SK-N-SH (cell line): ENCODE measurements at regions of chr5 and their contacts with region 1.

Region 1: GRCh38 chr5:149035372-149035790 is 27.5 kb downstream of the SH3TC2 start:
- DNase-seq: peak; percentile 67
- H3K4me3 ChIP-seq: no peak overlapping the region; a peak in 1 of 4 replicates
- H3K27ac ChIP-seq: no peak overlapping the region
- H3K4me1 ChIP-seq: peaks cover 0 to 6% of the 10 kb centered on the region in 2 experiments; a peak in 2 of 4 replicates
- H3K27me3 ChIP-seq: no peaks in the 10 kb centered on the region
- CTCF ChIP-seq: peak; percentile 95
- EP300 ChIP-seq: no peak
- RAD21 ChIP-seq: peak; percentile 97

Region 2: GRCh38 chr5:148443998-148444397 is 591.4 kb before region 1 on chr5:
- CTCF ChIA-PET with region 1: interaction called, 38 read pairs
- POLR2A ChIA-PET with region 1: no interaction called
- DNase-seq: peak; percentile 52
- H3K4me3 ChIP-seq: no peak overlapping the region
- H3K27ac ChIP-seq: no peak overlapping the region
- H3K4me1 ChIP-seq: no peaks in the 10 kb centered on the region
- H3K27me3 ChIP-seq: no peaks in the 10 kb centered on the region
- CTCF ChIP-seq: peak; percentile 85
- EP300 ChIP-seq: no peak
- RAD21 ChIP-seq: peak; percentile 90

Region 3: DNA sequence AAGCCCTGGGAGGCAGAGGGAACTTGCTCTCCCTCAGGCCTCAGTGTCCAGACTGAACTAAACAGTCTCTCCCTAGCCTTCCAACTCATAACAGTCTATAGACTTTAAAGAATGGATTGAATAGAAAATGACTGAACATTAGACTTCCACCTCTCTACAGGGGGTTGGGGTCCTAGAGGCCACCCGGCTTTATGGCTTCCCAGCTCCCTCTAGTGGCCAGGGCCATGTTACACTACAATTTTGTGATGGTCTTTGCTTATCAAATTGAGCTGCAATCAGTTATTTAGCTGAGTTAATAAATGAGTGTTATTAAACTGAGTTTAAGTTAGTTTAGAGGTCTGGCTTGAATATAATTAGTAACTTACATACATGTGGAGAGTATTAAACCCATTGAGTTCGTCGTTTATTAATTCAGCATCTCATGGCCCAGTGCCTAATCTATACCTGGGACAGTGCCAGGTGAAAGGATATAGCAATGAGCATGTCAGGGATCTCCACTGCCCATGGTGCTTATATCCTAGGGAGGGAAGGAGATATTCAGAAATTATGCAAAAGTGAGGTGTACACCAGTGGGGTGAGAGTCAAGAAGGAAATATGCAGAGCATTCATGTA is 77.7 kb before region 1 on chr5:
- CTCF ChIA-PET with region 1: interaction called, 19 read pairs
- POLR2A ChIA-PET with region 1: no interaction called
- DNase-seq: peak; percentile 59
- H3K4me3 ChIP-seq: no peak overlapping the region; a peak in 1 of 4 replicates
- H3K27ac ChIP-seq: no peak overlapping the region
- H3K4me1 ChIP-seq: peaks cover 0 to 3% of the 10 kb centered on the region in 2 experiments; a peak in 1 of 4 replicates
- H3K27me3 ChIP-seq: no peaks in the 10 kb centered on the region
- CTCF ChIP-seq: peak; percentile 90
- EP300 ChIP-seq: no peak
- RAD21 ChIP-seq: peak; percentile 78

Region 4: DNA sequence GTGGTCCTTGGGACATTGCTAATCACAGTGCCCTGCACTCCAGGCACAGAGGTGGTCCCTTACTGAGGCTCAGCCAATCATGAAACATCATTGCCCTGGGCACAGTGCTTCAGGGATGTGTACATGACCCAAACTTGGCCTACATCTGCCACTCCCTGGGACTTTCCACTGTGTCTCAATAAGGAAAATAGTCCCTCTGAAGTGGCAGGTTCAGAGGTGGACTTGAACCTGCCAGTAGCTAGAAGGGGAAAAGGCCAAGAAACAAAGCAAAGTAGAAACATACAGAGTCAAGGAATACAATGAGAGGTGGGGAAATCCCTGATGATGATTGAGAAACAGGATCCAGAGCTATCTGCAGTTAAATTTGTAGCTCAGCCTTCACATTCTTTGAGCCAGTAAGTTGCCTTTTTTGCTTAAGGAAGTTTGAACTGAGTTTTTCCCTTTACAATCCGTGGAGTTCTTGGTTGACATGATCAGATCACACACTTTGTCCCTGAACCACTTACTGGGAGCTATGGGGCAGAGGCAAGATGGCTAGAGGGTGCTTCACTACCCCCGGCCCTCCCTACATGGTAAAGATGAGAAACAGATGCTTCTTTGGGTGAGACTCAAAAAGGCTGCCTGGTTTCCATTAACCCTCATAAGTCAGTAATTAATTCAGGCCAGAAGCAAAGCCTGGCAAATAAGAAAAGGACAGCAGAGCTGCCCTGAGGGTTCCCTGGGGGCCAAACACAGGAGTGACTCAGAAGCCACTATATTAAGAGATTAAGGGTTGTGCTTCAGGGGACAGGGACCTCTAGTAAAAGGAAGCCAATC is 30.1 kb before region 1 on chr5:
- CTCF ChIA-PET with region 1: interaction called, 72 read pairs
- POLR2A ChIA-PET with region 1: no interaction called
- DNase-seq: peak; percentile 70
- H3K4me3 ChIP-seq: no peak overlapping the region
- H3K27ac ChIP-seq: no peak overlapping the region
- H3K4me1 ChIP-seq: peaks cover 7 to 12% of the 10 kb centered on the region in 2 experiments; a peak in 3 of 4 replicates
- H3K27me3 ChIP-seq: no peaks in the 10 kb centered on the region
- CTCF ChIP-seq: no peak
- EP300 ChIP-seq: peak; percentile 80 to 93
- RAD21 ChIP-seq: no peak

Region 5: GRCh38 chr5:149053072-149053695 is 17.8 kb after region 1 on chr5:
- CTCF ChIA-PET with region 1: interaction called, 68 read pairs
- POLR2A ChIA-PET with region 1: no interaction called
- DNase-seq: no peak
- H3K4me3 ChIP-seq: no peak overlapping the region
- H3K27ac ChIP-seq: peak overlapping the region in 1 of 2 experiments; percentile 39; a peak in 1 of 4 replicates
- H3K4me1 ChIP-seq: peaks cover 0 to 10% of the 10 kb centered on the region in 2 experiments; a peak in 2 of 4 replicates
- H3K27me3 ChIP-seq: no peaks in the 10 kb centered on the region
- CTCF ChIP-seq: no peak
- EP300 ChIP-seq: no peak
- RAD21 ChIP-seq: no peak

Region 6: GRCh38 chr5:149114403-149115312 is 79.3 kb after region 1 on chr5:
- CTCF ChIA-PET with region 1: interaction called, 82 read pairs
- POLR2A ChIA-PET with region 1: no interaction called
- DNase-seq: peak; percentile 54
- H3K4me3 ChIP-seq: peak overlapping the region in 1 of 2 experiments; percentile 8; a peak in 1 of 4 replicates
- H3K27ac ChIP-seq: 0 out of 4 replicates have a peak overlapping the region, but pooled peaks of 1 of the 2 experiments have one; percentile 2
- H3K4me1 ChIP-seq: peaks cover 0 to 8% of the 10 kb centered on the region in 2 experiments; a peak in 1 of 4 replicates
- H3K27me3 ChIP-seq: no peaks in the 10 kb centered on the region
- CTCF ChIP-seq: peak; percentile 85
- EP300 ChIP-seq: no peak
- RAD21 ChIP-seq: peak; percentile 95

Region 7: GRCh38 chr5:149298842-149299404 is 263.5 kb after region 1 on chr5:
- CTCF ChIA-PET with region 1: no interaction called
- POLR2A ChIA-PET with region 1: no interaction called
- DNase-seq: no peak
- H3K4me3 ChIP-seq: no peak overlapping the region
- H3K27ac ChIP-seq: no peak overlapping the region
- H3K4me1 ChIP-seq: peaks cover 0 to 6% of the 10 kb centered on the region in 2 experiments; a peak in 1 of 4 replicates
- H3K27me3 ChIP-seq: no peaks in the 10 kb centered on the region
- CTCF ChIP-seq: no peak
- EP300 ChIP-seq: no peak
- RAD21 ChIP-seq: no peak

Region 8: DNA sequence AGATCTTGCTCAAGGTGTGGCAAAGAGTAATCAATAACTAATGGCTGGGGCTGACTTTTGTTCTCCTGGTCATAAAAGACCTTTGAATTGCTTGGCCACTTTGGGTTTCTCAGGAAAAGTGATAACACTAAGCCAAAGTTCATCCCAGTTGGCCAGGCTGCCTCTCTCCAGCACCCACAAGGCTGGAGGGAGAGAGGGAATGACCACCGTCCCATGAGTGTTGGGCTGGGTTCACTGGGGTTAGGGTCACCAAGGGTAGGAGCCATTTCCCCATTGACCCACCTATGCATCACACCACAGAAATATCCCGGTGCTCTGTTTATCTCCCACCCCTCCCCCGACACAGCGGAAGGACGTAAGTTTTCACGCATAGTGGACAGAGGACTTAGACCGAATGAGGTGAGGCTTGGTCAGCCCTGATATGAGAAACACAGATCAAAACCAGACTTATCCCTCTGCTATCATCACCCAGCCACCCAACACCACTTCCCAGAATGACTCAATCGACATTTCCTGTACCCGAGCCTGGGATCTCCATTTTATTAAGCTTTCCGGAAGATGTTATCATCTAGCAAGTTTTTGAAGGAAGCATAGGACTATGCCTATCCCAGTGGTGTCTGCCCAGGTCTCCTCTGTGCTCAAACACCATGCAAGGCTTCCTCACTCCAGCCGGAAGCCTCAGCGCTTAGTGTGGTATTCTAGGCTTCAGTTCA is 667.7 kb after region 1 on chr5:
- CTCF ChIA-PET with region 1: no interaction called
- POLR2A ChIA-PET with region 1: no interaction called
- DNase-seq: no peak
- H3K4me3 ChIP-seq: no peak overlapping the region
- H3K27ac ChIP-seq: no peak overlapping the region
- H3K4me1 ChIP-seq: no peaks in the 10 kb centered on the region; a peak in 1 of 4 replicates
- H3K27me3 ChIP-seq: peaks cover 9% of the 10 kb centered on the region; the same call in 1 of the 2 replicates
- CTCF ChIP-seq: no peak
- EP300 ChIP-seq: no peak
- RAD21 ChIP-seq: no peak